Panc1 (cell line): ENCODE measurements at regions of chr4 and their contacts with region 1.

Region 1: DNA sequence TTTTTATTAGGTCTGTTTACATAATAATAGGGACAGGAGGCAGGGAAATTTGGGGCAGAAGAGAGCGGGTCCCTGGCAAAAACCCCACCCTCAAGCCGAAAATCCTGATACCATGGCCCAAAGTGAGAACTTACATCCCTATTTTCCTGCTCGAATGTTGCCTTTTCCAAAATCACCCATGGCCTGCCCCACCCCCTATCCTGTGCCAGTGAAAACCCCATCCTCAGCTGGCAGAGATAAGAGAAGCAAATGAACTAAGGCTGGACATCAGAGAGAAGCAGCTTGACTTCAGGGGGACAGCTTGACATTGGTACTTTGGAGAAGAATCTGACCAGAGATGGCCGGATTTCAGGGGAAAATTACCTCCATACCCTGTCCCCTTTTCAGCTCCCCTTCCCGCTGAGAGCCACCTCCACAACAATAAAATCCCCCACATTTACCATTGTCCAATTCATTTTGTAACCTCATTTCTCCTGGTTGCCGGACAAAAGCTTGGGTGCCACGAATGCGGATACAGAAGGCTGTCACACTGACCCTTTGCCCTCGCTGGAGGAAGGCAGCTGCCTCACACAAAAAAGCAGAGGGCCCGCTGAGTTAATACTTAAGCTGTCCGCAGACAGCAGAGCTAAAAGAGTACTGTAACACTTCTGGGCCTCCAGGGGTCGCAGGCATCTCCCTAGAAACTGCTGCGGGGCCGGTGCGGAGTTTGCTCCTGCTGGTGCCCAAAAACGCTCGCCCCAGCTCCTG is 196.2 kb downstream of the SNCA start:
- DNase-seq: no peak
- ATAC-seq: peak; percentile 90
- H3K4me3 ChIP-seq: peak overlapping the region in 1 of 2 experiments; percentile 3; a peak in 1 of 4 replicates
- H3K27ac ChIP-seq: no peak overlapping the region
- H3K4me1 ChIP-seq: no peaks in the 10 kb centered on the region
- H3K27me3 ChIP-seq: no peaks in the 10 kb centered on the region
- CTCF ChIP-seq: peak; percentile 69

Region 2: DNA sequence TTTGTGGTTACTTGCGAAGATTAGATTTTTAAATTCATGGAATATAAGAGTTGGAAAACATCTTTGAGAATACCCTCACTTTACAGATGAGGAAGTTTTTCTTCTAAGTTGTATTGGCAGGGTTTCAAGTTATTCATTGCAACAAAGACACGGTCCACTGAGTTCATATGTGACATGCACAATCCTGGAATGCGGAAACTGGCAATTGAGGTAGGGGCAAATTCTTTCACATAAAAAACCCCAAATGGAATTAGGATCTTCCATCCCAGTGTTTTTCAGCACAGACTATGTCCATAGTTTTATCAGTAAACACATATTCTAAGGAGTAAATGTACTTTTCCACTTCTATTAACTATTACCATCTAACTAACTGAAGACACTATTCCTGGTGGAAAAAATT is 861.4 kb before region 1 on chr4:
- CTCF ChIA-PET with region 1: no interaction called
- POLR2A ChIA-PET with region 1: no interaction called
- in situ Hi-C with region 1: no loop called
- intact Hi-C with region 1: no loop called
- DNase-seq: no peak
- ATAC-seq: no peak
- H3K4me3 ChIP-seq: no peak overlapping the region
- H3K27ac ChIP-seq: no peak overlapping the region
- H3K4me1 ChIP-seq: no peaks in the 10 kb centered on the region
- H3K27me3 ChIP-seq: no peaks in the 10 kb centered on the region
- CTCF ChIP-seq: no peak

Region 3: GRCh38 chr4:89586864-89587263 is 53.9 kb before region 1 on chr4:
- CTCF ChIA-PET with region 1: no interaction called
- POLR2A ChIA-PET with region 1: no interaction called
- in situ Hi-C with region 1: no loop called
- intact Hi-C with region 1: loop called (anchors 2 kb)
- DNase-seq: no peak
- ATAC-seq: no peak
- H3K4me3 ChIP-seq: no peak overlapping the region
- H3K27ac ChIP-seq: no peak overlapping the region
- H3K4me1 ChIP-seq: no peaks in the 10 kb centered on the region
- H3K27me3 ChIP-seq: no peaks in the 10 kb centered on the region
- CTCF ChIP-seq: peak; percentile 25; the same call in 1 of the 2 replicates

Region 4: DNA sequence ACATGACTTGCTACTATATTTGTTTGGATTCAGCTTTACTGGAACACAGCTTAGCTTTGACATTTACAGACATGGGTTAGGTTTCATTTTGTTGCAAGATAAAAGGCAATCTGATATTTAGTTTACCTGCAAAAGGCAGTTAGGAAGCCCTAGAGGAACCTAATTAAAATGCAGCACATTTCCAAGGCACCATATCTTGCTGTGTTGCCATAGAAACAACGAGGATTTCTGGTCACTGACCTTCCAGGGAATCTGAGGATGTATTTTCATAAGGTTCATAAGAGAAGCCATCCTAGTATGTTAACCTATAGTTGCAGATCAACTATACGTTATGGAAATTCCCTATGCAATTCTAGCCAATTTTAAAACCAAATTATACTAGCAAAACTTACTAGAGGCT is 80.2 kb after region 1 on chr4:
- CTCF ChIA-PET with region 1: no interaction called
- POLR2A ChIA-PET with region 1: no interaction called
- in situ Hi-C with region 1: no loop called
- intact Hi-C with region 1: no loop called
- DNase-seq: no peak
- ATAC-seq: no peak
- H3K4me3 ChIP-seq: no peak overlapping the region
- H3K27ac ChIP-seq: no peak overlapping the region
- H3K4me1 ChIP-seq: no peaks in the 10 kb centered on the region
- H3K27me3 ChIP-seq: no peaks in the 10 kb centered on the region
- CTCF ChIP-seq: no peak